CD8-positive, alpha-beta T cell (primary cell): ENCODE measurements at regions of chr1 and their contacts with region 1.

Region 1: DNA sequence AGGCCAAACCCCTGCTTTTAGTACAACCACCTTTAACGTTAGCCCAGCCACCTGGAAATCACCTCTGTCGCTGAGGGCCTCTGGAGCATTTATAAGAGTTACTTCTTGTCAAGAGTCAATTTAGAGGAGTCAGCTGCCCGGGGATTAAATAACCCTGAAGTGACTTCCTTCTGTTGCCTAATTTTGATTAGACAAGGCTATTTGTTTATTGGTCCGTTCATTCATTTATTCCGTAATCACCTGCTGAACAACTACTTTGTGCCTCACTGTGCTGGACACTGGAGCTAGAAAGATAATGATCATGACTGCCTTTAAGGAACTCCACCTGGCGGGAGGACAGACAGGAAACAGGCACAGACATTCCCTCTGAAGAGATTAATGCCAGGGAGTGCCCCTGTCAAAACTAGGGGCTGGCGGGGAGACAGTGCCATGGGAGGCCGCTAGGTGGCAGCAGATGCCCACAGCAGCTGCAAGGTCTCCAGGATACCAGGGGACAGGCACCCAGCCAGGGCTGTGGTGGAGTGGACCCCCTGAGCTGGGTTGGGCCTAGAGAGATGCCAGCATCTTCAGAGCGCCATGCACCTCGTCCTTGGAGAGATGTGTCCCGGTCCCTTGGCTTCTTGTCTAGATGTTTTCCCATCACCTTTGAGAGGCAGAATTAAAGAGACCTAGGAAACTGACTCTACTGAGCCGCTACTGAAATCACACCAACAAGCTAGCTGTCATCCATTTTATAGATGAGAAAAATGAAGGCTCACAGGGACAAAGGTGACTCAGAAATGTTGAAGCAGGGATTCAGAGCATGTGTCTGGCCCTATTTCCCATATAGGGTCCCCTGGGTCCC is 3.7 kb downstream of the REN start:
- DNase-seq: peak; percentile 61 to 87 (median 79)
- ATAC-seq: peak; percentile 99
- H3K4me3 ChIP-seq: no peak overlapping the region
- H3K4me3 Mint-ChIP-seq: no peak overlapping the region
- H3K27ac ChIP-seq: no peak overlapping the region
- H3K27ac Mint-ChIP-seq: no peak overlapping the region
- H3K4me1 ChIP-seq: no peaks in the 10 kb centered on the region
- H3K4me1 Mint-ChIP-seq: no peaks in the 10 kb centered on the region
- H3K27me3 ChIP-seq: no peaks in the 10 kb centered on the region
- H3K27me3 Mint-ChIP-seq: peaks cover 12% of the 10 kb centered on the region
- CTCF ChIP-seq: peak; percentile 98

Region 2: GRCh38 chr1:204025917-204026707 is 136.3 kb before region 1 on chr1:
- CTCF ChIA-PET with region 1: no interaction called
- POLR2A ChIA-PET with region 1: no interaction called
- intact Hi-C with region 1: no loop called
- DNase-seq: no peak
- ATAC-seq: no peak
- H3K4me3 ChIP-seq: no peak overlapping the region
- H3K4me3 Mint-ChIP-seq: no peak overlapping the region
- H3K27ac ChIP-seq: no peak overlapping the region
- H3K27ac Mint-ChIP-seq: no peak overlapping the region
- H3K4me1 ChIP-seq: no peaks in the 10 kb centered on the region
- H3K4me1 Mint-ChIP-seq: no peaks in the 10 kb centered on the region
- H3K27me3 ChIP-seq: no peaks in the 10 kb centered on the region
- H3K27me3 Mint-ChIP-seq: peaks cover 24% of the 10 kb centered on the region
- CTCF ChIP-seq: no peak

Region 3: DNA sequence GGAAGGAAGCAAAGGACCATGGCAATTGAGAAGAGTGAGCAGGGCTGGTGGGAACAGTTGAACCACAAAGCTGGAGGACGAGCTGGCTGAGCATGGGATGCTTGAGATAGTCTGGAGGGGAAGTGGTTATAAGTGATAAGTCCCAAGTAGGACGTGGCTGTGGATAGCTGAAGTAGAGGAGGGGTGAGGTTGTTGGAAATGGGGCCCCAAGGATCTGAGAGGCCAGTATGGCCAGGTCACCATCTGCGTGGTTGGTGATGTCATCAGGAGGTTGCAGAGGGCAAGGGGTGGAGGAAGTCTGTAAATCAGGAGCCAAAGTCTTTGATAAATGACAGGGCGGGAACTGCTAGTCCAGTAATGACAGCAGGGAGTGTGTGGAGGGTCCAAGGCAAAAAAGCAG is 14.7 kb after region 1 on chr1:
- CTCF ChIA-PET with region 1: interaction called, 16 read pairs
- POLR2A ChIA-PET with region 1: interaction called, 3 read pairs
- intact Hi-C with region 1: no loop called
- DNase-seq: no peak
- ATAC-seq: no peak
- H3K4me3 ChIP-seq: no peak overlapping the region
- H3K4me3 Mint-ChIP-seq: no peak overlapping the region
- H3K27ac ChIP-seq: no peak overlapping the region
- H3K27ac Mint-ChIP-seq: no peak overlapping the region
- H3K4me1 ChIP-seq: no peaks in the 10 kb centered on the region
- H3K4me1 Mint-ChIP-seq: no peaks in the 10 kb centered on the region
- H3K27me3 ChIP-seq: peaks cover 0 to 4% of the 10 kb centered on the region in 2 experiments
- H3K27me3 Mint-ChIP-seq: peaks cover 2% of the 10 kb centered on the region
- CTCF ChIP-seq: no peak

Region 4: DNA sequence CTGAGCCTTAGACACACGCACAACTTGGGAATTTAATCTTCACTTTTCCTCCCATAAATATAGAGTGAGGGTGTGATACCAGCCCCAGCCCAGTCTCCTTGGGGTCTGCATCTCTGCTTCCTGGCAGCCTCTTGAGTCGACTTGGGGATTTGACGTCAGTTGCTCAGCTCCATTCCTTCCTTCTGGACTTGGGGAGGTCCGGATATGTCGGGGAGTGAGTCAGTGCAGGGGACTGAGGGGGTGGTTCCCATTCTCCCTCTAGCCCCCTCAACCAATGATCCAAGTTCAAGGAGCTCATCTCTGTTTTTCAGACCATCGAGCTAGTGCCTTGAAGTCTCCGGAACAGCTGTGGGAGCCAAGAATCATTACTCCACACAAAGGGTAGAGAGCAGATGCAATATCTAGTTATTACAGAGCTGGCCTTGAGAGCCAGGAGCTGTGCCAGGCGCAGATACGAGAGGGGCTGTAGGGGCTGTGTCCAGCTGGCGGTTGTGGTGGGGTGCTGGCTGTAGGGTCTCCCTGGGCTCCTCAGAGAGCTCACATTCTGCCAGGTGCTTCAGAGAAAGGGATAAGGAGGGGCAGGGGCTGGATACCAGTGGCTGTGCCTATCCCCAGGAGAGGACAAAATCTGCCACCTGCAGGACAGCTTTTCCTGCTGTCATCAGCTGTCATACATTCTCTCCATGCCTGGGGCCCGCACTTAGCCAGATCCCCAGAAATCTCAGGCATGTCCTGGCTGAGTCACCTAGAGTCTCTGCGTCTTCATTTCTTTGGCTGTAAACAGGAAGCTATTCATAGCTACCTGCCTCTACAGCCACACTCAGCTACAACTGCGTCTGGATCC is 35.9 kb after region 1 on chr1:
- CTCF ChIA-PET with region 1: interaction called, 91 read pairs
- POLR2A ChIA-PET with region 1: no interaction called
- intact Hi-C with region 1: no loop called
- DNase-seq: no peak
- ATAC-seq: peak; percentile 52
- H3K4me3 ChIP-seq: no peak overlapping the region
- H3K4me3 Mint-ChIP-seq: no peak overlapping the region
- H3K27ac ChIP-seq: no peak overlapping the region
- H3K27ac Mint-ChIP-seq: peak overlapping the region; percentile 39
- H3K4me1 ChIP-seq: peaks cover 8% of the 10 kb centered on the region
- H3K4me1 Mint-ChIP-seq: peaks cover 17% of the 10 kb centered on the region
- H3K27me3 ChIP-seq: peaks cover 0 to 2% of the 10 kb centered on the region in 2 experiments
- H3K27me3 Mint-ChIP-seq: peaks cover 2% of the 10 kb centered on the region
- CTCF ChIP-seq: no peak

Region 5: GRCh38 chr1:204363335-204364124 is 201.1 kb after region 1 on chr1:
- CTCF ChIA-PET with region 1: interaction called, 210 read pairs
- POLR2A ChIA-PET with region 1: no interaction called
- intact Hi-C with region 1: loop called (anchors 1 kb)
- DNase-seq: peak; percentile 52 to 90 (median 71)
- ATAC-seq: peak; percentile 99
- H3K4me3 ChIP-seq: peak overlapping the region; percentile 45 to 52
- H3K4me3 Mint-ChIP-seq: peak overlapping the region; percentile 77
- H3K27ac ChIP-seq: peak overlapping the region in 1 of 2 experiments; percentile 24
- H3K27ac Mint-ChIP-seq: no peak overlapping the region
- H3K4me1 ChIP-seq: peaks cover 10% of the 10 kb centered on the region
- H3K4me1 Mint-ChIP-seq: peaks cover 5% of the 10 kb centered on the region
- H3K27me3 ChIP-seq: no peaks in the 10 kb centered on the region
- H3K27me3 Mint-ChIP-seq: peaks cover 4% of the 10 kb centered on the region
- CTCF ChIP-seq: peak; percentile 74

Region 6: GRCh38 chr1:204398217-204399081 is 236.0 kb after region 1 on chr1:
- CTCF ChIA-PET with region 1: interaction called, 45 read pairs
- POLR2A ChIA-PET with region 1: no interaction called
- intact Hi-C with region 1: loop called (anchors 1 kb)
- DNase-seq: peak; percentile 16 to 86 (median 54)
- ATAC-seq: peak; percentile 97
- H3K4me3 ChIP-seq: no peak overlapping the region
- H3K4me3 Mint-ChIP-seq: no peak overlapping the region
- H3K27ac ChIP-seq: peak overlapping the region in 1 of 2 experiments; percentile 21
- H3K27ac Mint-ChIP-seq: peak overlapping the region; percentile 80
- H3K4me1 ChIP-seq: peaks cover 4% of the 10 kb centered on the region
- H3K4me1 Mint-ChIP-seq: peaks cover 9% of the 10 kb centered on the region
- H3K27me3 ChIP-seq: no peaks in the 10 kb centered on the region
- H3K27me3 Mint-ChIP-seq: no peaks in the 10 kb centered on the region
- CTCF ChIP-seq: peak; percentile 87